ENCODE measurements at regions of chr1 and their contacts with region 1.

Region 1: GRCh38 chr1:170664828-170665612 is 1.1 kb downstream of the PRRX1 start:
- DNase-seq: peak in 4 of 5 donors; percentile 46 to 75 (median 62)
- ATAC-seq: peak; percentile 37 to 75 (median 72)
- H3K4me3 ChIP-seq: peak overlapping the region; percentile 49 to 93 (median 79)
- H3K27ac ChIP-seq: peak overlapping the region; percentile 58 to 98 (median 94)
- H3K4me1 ChIP-seq: peaks cover 0 to 50% (median 3%) of the 10 kb centered on the region in 12 donors
- H3K27me3 ChIP-seq: peaks cover 0 to 82% (median 9%) of the 10 kb centered on the region in 9 donors
- CTCF ChIP-seq: peak in 6 of 12 donors; percentile 6 to 44 (median 30)
- POLR2A ChIP-seq: peak in 1 of 2 donors; percentile 28

Region 2: GRCh38 chr1:169933984-169934725 is 730.9 kb before region 1 on chr1:
- intact Hi-C with region 1: loop called in 4 of 10 experiments (anchors 10 kb)
- DNase-seq: no peak
- ATAC-seq: no peak
- H3K4me3 ChIP-seq: no peak overlapping the region
- H3K27ac ChIP-seq: no peak overlapping the region
- H3K4me1 ChIP-seq: peaks cover 0 to 8% (median 0%) of the 10 kb centered on the region in 12 donors
- H3K27me3 ChIP-seq: no peaks in the 10 kb centered on the region
- CTCF ChIP-seq: no peak
- POLR2A ChIP-seq: no peak

Region 3: DNA sequence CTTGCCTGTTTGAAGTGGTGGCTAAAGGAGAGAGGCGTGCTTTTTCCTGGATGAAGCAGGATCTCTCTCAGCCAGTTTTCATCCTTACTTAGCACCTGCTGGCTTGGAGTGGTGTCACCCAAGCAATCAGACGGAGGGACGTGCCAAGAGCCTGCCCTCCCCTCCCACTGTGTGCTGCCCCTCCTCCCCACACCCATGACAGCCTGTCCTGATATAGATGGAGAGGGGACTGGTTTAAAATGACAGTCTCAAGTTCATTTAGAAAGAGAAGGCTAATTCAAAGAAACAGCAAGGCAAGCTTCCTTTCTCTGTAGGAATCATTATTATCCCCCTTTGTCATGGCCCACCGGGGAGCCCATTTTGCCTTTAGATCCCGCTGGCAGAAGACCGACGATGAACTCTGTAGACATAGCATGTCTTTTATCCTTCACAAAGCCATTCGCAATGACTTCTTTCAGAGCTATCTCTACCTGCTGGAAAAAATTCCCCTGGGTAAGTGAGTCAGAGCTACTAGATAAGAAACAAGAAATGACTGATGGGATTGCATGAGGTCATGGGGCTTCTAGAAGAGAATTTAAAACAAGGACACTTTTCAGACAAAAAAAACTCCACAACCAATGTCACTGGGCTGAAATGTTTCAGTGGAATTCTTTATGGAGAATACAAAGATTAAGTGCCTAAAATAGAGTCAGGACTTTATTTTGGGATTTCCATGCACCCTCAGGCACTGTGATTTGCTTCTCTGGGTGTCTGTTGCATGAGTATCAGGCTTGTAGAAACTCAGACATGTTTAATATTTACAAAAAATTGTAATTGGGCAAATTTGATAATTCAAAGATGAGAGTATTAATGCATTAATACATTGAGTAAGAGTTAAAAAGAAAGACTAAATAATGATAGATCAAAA is 519.0 kb before region 1 on chr1 and contains the start of gene NTMT2:
- intact Hi-C with region 1: loop called in 2 of 10 experiments (anchors 10 kb)
- DNase-seq: peak; percentile 64 to 83 (median 72)
- ATAC-seq: peak; percentile 93 to 99 (median 97)
- H3K4me3 ChIP-seq: peak within 1 kb of the TSS in 10 of 12 donors; percentile 7 to 49 (median 34)
- H3K27ac ChIP-seq: peak within 1 kb of the TSS; percentile 56 to 97 (median 83)
- H3K4me1 ChIP-seq: peaks cover 0 to 24% (median 5%) of the 10 kb centered on the region in 12 donors
- H3K27me3 ChIP-seq: no peaks in the 10 kb centered on the region
- CTCF ChIP-seq: no peak
- POLR2A ChIP-seq: no peak
- total RNA-seq, gene NTMT2: 0.56 to 3.6 (median 2.0) TPM

Region 4: DNA sequence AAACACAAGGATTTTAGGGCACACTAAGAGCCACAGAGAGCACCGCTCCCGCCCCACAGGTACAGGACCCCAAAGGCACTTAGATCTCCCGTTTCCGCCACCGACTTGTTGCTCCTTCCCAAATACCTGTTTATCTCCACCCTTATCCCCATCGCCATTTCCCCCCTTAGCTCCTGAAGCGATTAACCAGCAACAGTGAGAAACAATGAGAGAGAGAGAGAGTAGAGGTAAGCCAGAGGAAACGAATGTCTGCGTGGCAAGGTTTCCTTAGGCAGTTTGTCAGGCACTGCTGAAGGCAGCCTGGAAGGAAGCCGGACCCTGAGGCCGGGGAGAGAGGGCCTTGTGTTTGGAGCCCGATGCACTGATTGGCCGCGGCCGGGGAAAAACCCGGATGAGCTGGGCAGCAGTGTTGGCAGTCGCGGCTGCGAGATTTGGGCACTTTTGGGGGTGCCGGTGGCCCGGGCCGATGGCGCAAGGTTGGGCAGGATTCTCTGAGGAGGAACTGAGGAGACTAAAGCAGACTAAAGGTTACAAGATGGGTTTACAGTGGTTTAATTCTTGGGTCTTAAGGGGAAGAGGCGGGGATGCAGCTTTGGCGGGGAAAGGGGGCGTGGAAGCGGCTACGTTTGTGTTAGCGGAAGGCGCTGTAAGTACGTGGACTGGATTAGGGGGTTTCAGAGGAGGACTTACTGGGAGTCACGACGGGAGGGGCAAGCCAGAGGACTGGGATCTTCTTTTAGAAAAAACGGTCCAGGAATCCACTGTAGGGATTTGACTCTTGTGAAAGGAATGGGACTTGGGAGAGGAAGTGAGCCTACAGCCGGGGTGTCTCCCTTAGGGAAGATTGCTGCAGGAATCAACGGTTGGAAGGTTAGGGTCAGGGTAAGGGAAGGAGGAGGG is 133.0 kb before region 1 on chr1 and contains the start of gene GORAB:
- intact Hi-C with region 1: loop called in 7 of 10 experiments (anchors 2 to 10 kb)
- DNase-seq: peak; percentile 92 to 95 (median 93)
- ATAC-seq: peak; percentile 99
- H3K4me3 ChIP-seq: peak within 1 kb of the TSS; percentile 36 to 82 (median 72)
- H3K27ac ChIP-seq: peak within 1 kb of the TSS; percentile 89 to 96 (median 92)
- H3K4me1 ChIP-seq: peaks cover 0 to 28% (median 17%) of the 10 kb centered on the region in 12 donors
- H3K27me3 ChIP-seq: no peaks in the 10 kb centered on the region
- CTCF ChIP-seq: no peak
- POLR2A ChIP-seq: peak; percentile 37 to 80
- total RNA-seq, gene GORAB: 4.7 to 15.5 (median 7.6) TPM

Region 5: GRCh38 chr1:170729225-170730002 is 64.4 kb after region 1 on chr1:
- intact Hi-C with region 1: loop called in 1 of 10 experiments (anchors 5 kb)
- DNase-seq: peak in 3 of 5 donors; percentile 26 to 65 (median 31)
- ATAC-seq: peak; percentile 90 to 96 (median 92)
- H3K4me3 ChIP-seq: no peak overlapping the region
- H3K27ac ChIP-seq: peak overlapping the region; percentile 5 to 79 (median 68)
- H3K4me1 ChIP-seq: peaks cover 0 to 44% (median 29%) of the 10 kb centered on the region in 12 donors
- H3K27me3 ChIP-seq: no peaks in the 10 kb centered on the region
- CTCF ChIP-seq: no peak
- POLR2A ChIP-seq: no peak

Region 6: GRCh38 chr1:170881268-170882265 is 216.5 kb after region 1 on chr1:
- intact Hi-C with region 1: loop called in 6 of 10 experiments (anchors 2 to 10 kb)
- DNase-seq: peak in 1 of 5 donors; percentile 17
- ATAC-seq: peak in 2 of 4 donors; percentile 65 to 80
- H3K4me3 ChIP-seq: peak overlapping the region in 7 of 12 donors; percentile 3 to 44 (median 22)
- H3K27ac ChIP-seq: no peak overlapping the region
- H3K4me1 ChIP-seq: peaks cover 0 to 10% (median 0%) of the 10 kb centered on the region in 12 donors
- H3K27me3 ChIP-seq: no peaks in the 10 kb centered on the region
- CTCF ChIP-seq: peak; percentile 20 to 74 (median 65)
- POLR2A ChIP-seq: no peak

Measured in heart left ventricle (tissue), 16 donors.